GM18951 (cell line): ENCODE measurements at regions of chr9 and their contacts with region 1.

Region 1: DNA sequence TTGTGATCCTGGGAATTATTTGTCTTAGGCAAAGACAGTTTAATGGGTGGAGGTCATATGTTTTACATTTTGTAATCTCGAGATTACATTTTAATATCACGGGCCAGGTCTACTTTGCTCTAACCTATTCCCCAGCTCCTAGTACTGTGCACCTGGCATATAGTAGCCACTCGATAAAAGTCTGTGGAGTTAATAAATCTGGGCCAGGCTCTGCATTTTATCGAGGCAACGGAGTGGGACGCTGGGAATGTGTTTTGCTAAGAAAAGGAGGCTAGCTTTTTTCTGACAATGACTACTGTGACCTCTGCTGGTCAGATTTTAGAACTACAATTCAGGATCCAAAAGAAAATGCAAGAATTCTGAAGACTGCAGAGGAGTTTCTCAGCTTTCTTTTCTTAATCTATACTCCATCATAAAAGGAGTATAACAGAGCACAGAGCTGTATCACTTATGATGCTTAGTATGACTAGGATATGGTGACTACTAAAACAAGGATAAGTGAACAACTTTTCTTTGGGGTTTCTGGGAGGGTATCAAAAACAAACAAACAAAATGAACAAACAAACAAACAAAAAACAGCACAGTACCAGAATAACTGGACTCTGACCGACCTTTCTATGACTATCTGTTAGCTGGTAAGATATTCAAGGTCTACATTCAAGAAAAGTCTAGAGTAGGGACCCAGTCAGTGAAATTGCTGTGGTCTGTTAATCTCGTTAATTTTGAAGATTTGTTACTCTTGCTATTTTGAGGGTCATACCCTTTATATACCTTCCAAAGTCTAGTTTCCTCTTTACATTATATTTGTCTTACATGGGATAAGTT is 46.1 kb upstream of the CER1 start:
- POLR2A ChIP-seq: no peak

Region 2: DNA sequence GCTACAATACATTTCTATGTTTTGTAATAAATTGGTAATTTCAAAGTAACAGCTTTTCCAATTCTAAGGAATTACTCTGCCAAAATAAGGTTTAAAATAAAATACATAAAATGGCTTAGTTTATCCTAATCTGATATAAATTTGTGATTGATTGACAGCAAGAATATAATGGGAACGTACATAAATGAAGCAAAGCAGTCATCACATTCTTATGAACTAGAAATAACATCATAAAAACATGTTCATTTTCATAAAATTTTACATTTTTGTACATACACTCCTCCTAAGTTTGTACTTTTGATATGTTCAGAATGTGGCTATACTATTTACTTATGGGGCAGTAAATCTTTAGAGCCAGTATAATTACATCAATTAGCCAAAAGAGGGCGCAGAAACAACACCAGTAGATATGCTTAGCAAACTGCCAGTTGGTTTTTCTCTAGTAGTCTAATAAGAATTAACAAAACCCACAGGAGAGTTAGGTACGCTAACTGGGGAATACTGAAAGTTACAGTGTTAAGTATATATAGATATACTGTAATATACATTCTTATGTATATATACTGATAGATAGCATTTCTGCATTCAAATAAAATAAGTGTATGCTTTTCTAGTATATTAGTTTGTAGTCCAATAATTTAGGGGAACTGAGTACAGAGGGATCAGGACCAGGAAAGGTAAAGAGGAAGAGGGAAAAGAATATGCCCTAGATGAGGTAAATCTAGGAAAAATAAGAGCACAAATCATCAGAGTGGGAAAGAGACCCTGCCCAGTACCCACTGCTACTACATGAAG is 152.2 kb before region 1 on chr9:
- in situ Hi-C with region 1: loop called (anchors 10 kb)
- POLR2A ChIP-seq: no peak